ENCODE measurements at regions of chr3 and their contacts with region 1.

Region 1: GRCh38 chr3:9384141-9384853 is 13.1 kb upstream of the SETD5 start:
- DNase-seq: no peak
- ATAC-seq: no peak
- H3K4me3 Mint-ChIP-seq: no peak overlapping the region
- H3K27ac Mint-ChIP-seq: no peak overlapping the region
- H3K4me1 Mint-ChIP-seq: peaks cover 10% of the 10 kb centered on the region
- H3K27me3 Mint-ChIP-seq: no peaks in the 10 kb centered on the region
- CTCF ChIP-seq: no peak

Region 2: GRCh38 chr3:9362731-9363530 is 21.4 kb before region 1 on chr3 and contains the start of gene THUMPD3:
- CTCF ChIA-PET with region 1: no interaction called
- POLR2A ChIA-PET with region 1: interaction called, 12 read pairs
- intact Hi-C with region 1: no loop called
- DNase-seq: peak; percentile 92
- ATAC-seq: peak; percentile 96
- H3K4me3 Mint-ChIP-seq: peak within 1 kb of the TSS; percentile 99
- H3K27ac Mint-ChIP-seq: peak within 1 kb of the TSS; percentile 98
- H3K4me1 Mint-ChIP-seq: peaks cover 16% of the 10 kb centered on the region
- H3K27me3 Mint-ChIP-seq: no peaks in the 10 kb centered on the region
- CTCF ChIP-seq: no peak
- total RNA-seq, gene THUMPD3: 34.3 and 42.0 TPM in 2 replicates

Region 3: DNA sequence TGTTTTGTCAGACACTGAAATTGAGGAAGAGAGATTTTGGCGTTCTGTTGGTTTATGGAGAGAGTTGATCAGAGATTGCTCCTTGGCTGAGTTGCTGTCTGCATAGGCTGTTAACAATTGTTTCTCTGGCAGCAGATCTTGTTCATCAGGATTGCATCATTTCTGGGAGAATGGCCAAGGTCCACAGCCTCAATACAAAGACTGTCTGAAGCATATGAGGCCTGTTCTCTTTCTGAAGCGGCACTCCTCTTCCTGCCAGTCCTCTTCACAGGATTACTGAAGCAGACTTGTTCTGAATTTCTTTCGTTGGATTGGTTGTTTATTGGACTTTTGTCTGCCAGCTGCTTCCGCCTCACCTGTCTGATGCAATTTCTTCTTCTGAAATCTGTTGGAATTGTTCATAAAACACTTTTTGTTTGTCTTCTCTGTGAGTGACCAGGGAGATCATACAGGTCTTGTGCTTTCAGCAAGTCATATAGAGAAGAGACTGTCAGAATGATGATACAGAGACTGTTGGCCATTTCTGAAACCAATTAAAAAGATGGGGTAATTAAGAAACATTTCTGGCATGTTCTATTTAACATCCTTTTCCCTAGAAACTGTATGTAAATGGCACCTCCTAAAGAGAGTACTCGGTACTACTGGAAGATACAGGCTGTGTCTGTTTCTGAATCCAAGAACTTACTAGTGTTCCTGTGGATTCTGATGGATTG is 38.6 kb after region 1 on chr3:
- CTCF ChIA-PET with region 1: no interaction called
- POLR2A ChIA-PET with region 1: no interaction called
- intact Hi-C with region 1: loop called (anchors 5 kb)
- DNase-seq: no peak
- ATAC-seq: peak; percentile 28
- H3K4me3 Mint-ChIP-seq: no peak overlapping the region
- H3K27ac Mint-ChIP-seq: peak overlapping the region; percentile 46
- H3K4me1 Mint-ChIP-seq: peaks cover 24% of the 10 kb centered on the region
- H3K27me3 Mint-ChIP-seq: no peaks in the 10 kb centered on the region
- CTCF ChIP-seq: no peak

Region 4: GRCh38 chr3:9448643-9449042 is 64.3 kb after region 1 on chr3:
- CTCF ChIA-PET with region 1: no interaction called
- POLR2A ChIA-PET with region 1: no interaction called
- intact Hi-C with region 1: no loop called
- DNase-seq: no peak
- ATAC-seq: no peak
- H3K4me3 Mint-ChIP-seq: no peak overlapping the region
- H3K27ac Mint-ChIP-seq: no peak overlapping the region
- H3K4me1 Mint-ChIP-seq: peaks cover 7% of the 10 kb centered on the region
- H3K27me3 Mint-ChIP-seq: no peaks in the 10 kb centered on the region
- CTCF ChIP-seq: no peak